ENCODE measurements at regions of chr11 and their contacts with region 1.

Region 1: DNA sequence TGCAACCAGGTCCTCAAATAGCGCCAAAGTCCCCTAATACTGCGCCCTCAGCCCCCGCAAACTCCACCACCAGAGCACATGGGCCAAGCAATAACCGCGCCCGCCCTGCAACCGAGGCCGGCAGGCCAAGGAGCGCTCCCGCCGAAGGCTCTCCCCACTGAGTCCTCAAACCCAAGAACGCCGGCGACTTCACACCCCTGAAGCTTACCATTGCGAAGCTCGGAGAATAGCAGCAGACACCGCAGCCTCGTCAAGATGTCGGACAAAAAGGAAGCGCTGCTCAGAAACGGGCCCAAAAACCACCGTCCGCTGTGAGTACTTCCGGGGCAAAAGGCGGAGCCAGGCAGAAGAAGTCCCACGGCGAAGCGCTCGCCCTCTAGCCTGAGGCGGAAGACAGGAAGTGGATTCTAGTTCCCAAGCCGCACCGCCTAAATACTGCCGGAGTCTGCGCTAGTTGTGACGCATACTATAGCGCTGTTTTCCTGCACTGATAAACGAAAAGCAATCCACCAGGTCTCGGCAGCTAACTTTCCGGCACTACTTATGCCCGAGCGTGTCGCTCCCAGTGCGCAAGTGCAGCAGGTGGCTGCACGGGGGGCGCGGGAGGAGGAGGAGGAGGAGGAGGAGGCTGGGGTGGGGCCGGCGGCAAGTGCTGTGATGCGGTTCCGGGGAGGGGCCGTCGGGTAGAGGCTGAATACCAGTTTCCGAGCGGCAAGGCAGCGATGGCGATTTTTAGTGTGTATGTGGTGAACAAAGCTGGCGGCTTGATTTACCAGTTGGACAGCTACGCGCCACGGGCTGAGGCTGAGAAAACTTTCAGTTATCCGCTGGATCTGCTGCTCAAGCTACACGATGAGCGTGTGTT is at the starts of genes RPS25 and TRAPPC4:
- DNase-seq: peak; percentile 98
- ATAC-seq: peak; percentile 92
- H3K4me3 Mint-ChIP-seq: peak within 1 kb of the TSS; percentile 99
- H3K27ac Mint-ChIP-seq: peak within 1 kb of the TSS; percentile 99
- H3K4me1 Mint-ChIP-seq: peaks cover 53% of the 10 kb centered on the region
- H3K27me3 Mint-ChIP-seq: no peaks in the 10 kb centered on the region
- total RNA-seq, gene RPS25: 1,590 to 1,820 TPM
- total RNA-seq, gene TRAPPC4: 62.2 to 81.9 TPM

Region 2: GRCh38 chr11:118359295-118359958 is 658.9 kb before region 1 on chr11 and contains the start of gene UBE4A:
- CTCF ChIA-PET with region 1: no interaction called
- POLR2A ChIA-PET with region 1: no interaction called
- intact Hi-C with region 1: loop called in 1 of 2 experiments (anchors 1 kb)
- DNase-seq: peak; percentile 99
- ATAC-seq: peak; percentile 96
- H3K4me3 Mint-ChIP-seq: peak within 1 kb of the TSS; percentile 100
- H3K27ac Mint-ChIP-seq: peak within 1 kb of the TSS; percentile 97
- H3K4me1 Mint-ChIP-seq: peaks cover 43% of the 10 kb centered on the region
- H3K27me3 Mint-ChIP-seq: no peaks in the 10 kb centered on the region
- total RNA-seq, gene UBE4A: 44.2 to 50.7 TPM

Region 3: DNA sequence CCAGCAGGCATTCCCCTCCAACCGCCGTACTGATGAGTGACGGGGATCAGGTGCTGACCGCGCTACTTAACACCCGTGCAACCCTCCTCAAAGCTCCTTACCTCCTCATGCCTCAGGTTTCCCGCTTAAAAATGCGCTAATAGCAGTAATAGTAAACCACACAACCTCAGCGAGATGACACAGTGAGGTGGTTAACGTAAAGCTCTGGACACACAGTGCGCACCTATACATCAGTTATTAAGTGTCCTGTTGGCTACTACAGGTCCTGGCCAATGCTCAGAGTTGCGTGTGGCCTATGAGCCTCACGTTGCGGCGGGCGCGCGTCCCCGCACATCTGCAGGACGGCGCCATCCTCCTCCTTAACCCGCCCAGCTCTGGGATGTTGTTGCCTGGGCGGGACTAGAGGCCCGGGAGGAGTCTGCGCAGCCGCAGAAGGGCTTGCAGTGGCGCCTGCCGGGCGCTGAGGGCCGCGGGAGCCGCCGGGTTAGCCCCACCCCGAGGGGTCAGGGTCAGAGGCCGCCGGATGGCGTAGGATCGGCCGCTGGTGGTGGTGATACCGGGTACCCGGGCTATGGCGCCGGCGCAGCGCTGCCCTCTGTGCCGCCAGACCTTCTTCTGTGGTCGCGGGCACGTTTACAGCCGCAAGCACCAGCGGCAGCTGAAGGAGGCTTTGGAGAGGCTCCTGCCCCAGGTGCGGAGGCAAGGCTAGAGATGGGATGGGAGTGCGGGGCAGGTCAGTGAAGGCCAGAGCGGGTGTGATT is 20.5 kb before region 1 on chr11 and contains the start of gene CENATAC:
- CTCF ChIA-PET with region 1: interaction called, 4 read pairs
- POLR2A ChIA-PET with region 1: interaction called, 6 read pairs
- intact Hi-C with region 1: loop called (anchors 1 kb)
- DNase-seq: peak; percentile 98
- ATAC-seq: peak; percentile 93
- H3K4me3 Mint-ChIP-seq: peak within 1 kb of the TSS; percentile 88
- H3K27ac Mint-ChIP-seq: peak within 1 kb of the TSS; percentile 98
- H3K4me1 Mint-ChIP-seq: peaks cover 32% of the 10 kb centered on the region
- H3K27me3 Mint-ChIP-seq: no peaks in the 10 kb centered on the region
- total RNA-seq, gene CENATAC: 23.7 to 26.2 TPM

Region 4: GRCh38 chr11:119030329-119031049 is 12.2 kb after region 1 on chr11 and contains the start of gene SLC37A4:
- CTCF ChIA-PET with region 1: interaction called, 4 read pairs
- POLR2A ChIA-PET with region 1: interaction called, 5 read pairs
- intact Hi-C with region 1: loop called (anchors 1 kb)
- DNase-seq: peak; percentile 99
- ATAC-seq: peak; percentile 94
- H3K4me3 Mint-ChIP-seq: peak within 1 kb of the TSS; percentile 76
- H3K27ac Mint-ChIP-seq: peak within 1 kb of the TSS; percentile 86
- H3K4me1 Mint-ChIP-seq: peaks cover 19% of the 10 kb centered on the region
- H3K27me3 Mint-ChIP-seq: no peaks in the 10 kb centered on the region
- total RNA-seq, gene SLC37A4: 26.2 to 36.2 TPM

Region 5: DNA sequence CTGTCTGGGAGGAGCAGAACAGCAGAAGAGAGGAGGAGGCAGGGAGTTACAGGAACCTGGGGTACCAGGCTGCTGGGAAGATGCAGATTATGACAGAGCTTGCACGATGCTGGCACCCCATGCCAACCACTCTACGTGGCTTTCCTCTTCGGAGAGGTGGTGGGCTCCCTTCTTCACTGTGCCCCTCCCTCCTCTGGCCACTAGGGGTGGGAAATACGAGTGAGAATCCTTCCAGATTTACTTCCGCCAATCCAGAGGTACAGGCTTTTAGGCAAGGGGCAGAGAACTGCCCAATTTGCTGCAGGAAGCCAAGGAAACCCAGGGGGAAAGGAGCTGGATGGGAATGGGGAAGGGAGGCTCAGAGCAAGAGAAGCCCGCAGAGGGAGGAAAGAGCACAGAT is 26.4 kb after region 1 on chr11:
- CTCF ChIA-PET with region 1: no interaction called
- POLR2A ChIA-PET with region 1: no interaction called
- intact Hi-C with region 1: no loop called
- DNase-seq: no peak
- ATAC-seq: no peak
- H3K4me3 Mint-ChIP-seq: no peak overlapping the region
- H3K27ac Mint-ChIP-seq: no peak overlapping the region
- H3K4me1 Mint-ChIP-seq: peaks cover 12% of the 10 kb centered on the region
- H3K27me3 Mint-ChIP-seq: no peaks in the 10 kb centered on the region

Region 6: DNA sequence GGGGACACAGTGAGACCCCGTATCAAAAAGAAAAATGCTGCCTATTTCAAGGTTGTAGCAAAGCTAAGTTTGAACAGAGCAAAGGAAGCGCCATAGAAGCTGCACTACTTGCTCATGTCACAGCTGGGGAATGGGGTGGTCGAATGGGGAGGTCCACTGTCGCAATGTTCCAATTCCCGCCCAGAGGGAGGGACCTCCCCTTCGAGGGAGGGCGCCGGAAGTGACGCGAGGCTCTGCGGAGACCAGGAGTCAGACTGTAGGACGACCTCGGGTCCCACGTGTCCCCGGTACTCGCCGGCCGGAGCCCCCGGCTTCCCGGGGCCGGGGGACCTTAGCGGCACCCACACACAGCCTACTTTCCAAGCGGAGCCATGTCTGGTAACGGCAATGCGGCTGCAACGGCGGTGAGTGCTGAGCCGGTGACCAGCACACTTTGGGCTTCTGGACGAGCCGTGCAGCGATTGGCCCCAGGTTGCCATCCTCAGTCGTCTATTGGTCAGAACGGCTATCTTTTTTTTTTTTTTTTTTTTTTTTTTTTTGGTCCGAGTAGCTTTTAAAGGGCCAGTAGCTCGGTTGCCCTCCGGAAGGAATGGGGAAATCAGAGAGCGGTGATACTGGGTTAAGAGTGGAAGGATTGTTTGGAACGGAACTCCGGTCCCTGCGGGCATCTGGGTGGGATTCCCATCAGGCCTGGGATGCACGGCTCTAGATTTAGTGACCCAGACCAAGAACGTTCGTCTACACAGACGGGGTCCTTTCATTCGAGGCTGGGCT is 66.5 kb after region 1 on chr11 and contains the start of gene HMBS:
- CTCF ChIA-PET with region 1: interaction called, 3 read pairs
- POLR2A ChIA-PET with region 1: no interaction called
- intact Hi-C with region 1: loop called in 1 of 2 experiments (anchors 1 kb)
- DNase-seq: peak; percentile 96
- ATAC-seq: peak; percentile 94
- H3K4me3 Mint-ChIP-seq: peak within 1 kb of the TSS; percentile 97
- H3K27ac Mint-ChIP-seq: peak within 1 kb of the TSS; percentile 92
- H3K4me1 Mint-ChIP-seq: peaks cover 22% of the 10 kb centered on the region
- H3K27me3 Mint-ChIP-seq: no peaks in the 10 kb centered on the region
- total RNA-seq, gene HMBS: 39.8 to 41.8 TPM

Region 7: DNA sequence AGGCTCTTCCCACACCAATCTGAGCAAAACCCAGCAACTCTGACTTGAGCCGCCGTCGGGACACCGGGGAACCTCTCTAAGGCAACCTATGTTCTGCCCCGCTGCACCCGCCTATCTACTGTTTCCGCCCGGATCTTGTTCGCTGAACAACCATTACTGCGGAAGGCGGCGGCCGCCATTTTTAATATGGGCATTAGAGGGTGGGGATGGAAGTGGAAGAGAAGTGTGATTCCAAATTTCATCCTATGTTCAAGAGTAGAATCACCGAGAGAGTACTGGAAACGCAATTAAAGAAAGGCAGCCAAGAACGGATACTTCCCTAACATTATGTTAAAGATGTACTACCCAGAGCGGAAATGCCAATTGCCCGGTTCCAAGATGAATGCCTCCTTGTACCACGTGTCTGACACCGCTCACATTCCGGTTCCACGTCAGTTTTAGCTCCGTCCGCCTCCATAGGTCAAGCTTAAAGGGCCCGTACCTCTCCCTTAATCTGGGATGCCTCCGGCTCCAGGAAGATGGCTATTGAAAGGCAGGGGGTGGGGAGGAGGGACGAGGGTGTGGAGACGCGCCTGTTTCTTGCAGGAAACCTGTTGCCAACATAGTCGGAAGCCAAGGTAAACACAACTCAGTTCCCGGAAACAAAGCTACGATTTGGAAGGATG is 83.6 kb after region 1 on chr11 and contains the start of gene DPAGT1:
- CTCF ChIA-PET with region 1: interaction called, 5 read pairs
- POLR2A ChIA-PET with region 1: interaction called, 4 read pairs
- intact Hi-C with region 1: loop called (anchors 1 to 2 kb)
- DNase-seq: peak; percentile 93
- ATAC-seq: peak; percentile 86
- H3K4me3 Mint-ChIP-seq: peak within 1 kb of the TSS; percentile 95
- H3K27ac Mint-ChIP-seq: peak within 1 kb of the TSS; percentile 100
- H3K4me1 Mint-ChIP-seq: peaks cover 42% of the 10 kb centered on the region
- H3K27me3 Mint-ChIP-seq: no peaks in the 10 kb centered on the region
- total RNA-seq, gene DPAGT1: 57.8 to 73.5 TPM

Region 8: DNA sequence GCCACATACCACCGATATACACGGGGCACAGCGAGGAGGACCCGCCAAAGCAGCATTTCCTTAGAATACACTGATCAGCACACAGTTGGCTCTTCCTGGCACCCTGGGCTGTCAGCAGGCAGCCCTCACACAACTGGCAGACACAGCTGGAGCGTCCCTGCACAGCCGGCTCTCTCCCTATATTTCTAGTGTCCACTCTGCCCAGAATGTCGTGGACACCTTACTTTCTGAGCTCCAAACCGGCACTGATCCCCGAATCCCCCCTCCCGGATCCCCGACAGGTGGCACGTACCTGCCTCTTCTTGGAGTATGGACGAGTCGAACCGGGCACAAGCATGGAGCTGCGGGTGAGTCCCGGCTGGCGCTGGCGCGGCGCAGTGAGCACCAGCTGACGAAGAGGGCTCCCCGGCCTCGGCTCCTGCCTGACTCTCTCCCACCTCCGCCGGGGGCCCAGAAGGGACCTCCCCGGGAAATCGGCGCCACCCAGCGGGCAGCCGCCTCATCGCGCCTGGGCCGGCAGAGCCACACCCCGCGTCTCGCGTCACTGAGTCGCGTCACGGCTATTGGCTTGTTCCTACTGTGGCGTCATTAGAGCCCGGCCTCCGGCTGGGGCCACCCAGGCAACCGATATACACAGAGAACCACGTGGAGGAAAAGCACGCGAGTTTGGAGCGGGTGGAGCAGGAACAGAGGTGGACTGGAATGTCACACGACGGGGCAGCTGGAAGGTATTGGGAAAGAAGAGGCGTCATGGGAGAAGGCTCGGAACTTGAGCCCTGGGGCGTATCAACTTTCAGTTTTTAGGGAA is 363.1 kb after region 1 on chr11 and contains the start of gene USP2:
- CTCF ChIA-PET with region 1: no interaction called
- POLR2A ChIA-PET with region 1: no interaction called
- intact Hi-C with region 1: loop called in 1 of 2 experiments (anchors 1 kb)
- DNase-seq: peak; percentile 98
- ATAC-seq: peak; percentile 98
- H3K4me3 Mint-ChIP-seq: no peak within 1 kb of the TSS
- H3K27ac Mint-ChIP-seq: peak within 1 kb of the TSS; percentile 18
- H3K4me1 Mint-ChIP-seq: peaks cover 7% of the 10 kb centered on the region
- H3K27me3 Mint-ChIP-seq: no peaks in the 10 kb centered on the region
- total RNA-seq, gene USP2: 0.58 to 0.71 TPM